CD4-positive, alpha-beta T cell (primary cell): ENCODE measurements at regions of chr21 and their contacts with region 1.

Region 1: DNA sequence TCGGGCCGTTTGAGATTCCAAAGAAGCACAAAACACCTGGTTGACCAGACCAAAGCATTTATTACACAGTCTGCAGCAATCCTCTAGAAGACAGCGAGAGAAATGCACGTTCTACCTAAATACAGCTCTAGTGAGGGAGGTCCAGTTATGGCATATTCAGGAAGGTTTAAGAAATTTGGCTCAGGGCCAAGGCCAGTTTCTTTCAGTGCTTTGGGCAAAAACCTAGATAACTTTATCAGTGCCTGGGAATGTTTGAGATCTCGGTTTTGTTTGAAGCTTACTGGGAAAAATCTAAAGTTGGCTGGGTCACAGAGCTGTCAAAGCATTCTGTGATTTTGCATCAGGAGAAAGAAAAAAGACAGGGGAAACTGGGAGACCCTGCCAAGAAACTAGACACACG is 514.0 kb upstream of the TMPRSS15 start:
- DNase-seq: no peak
- ATAC-seq: no peak
- H3K4me3 ChIP-seq: no peak overlapping the region
- H3K4me3 Mint-ChIP-seq: no peak overlapping the region
- H3K27ac ChIP-seq: no peak overlapping the region
- H3K27ac Mint-ChIP-seq: no peak overlapping the region
- H3K4me1 ChIP-seq: no peaks in the 10 kb centered on the region
- H3K4me1 Mint-ChIP-seq: no peaks in the 10 kb centered on the region
- H3K27me3 ChIP-seq: no peaks in the 10 kb centered on the region
- H3K27me3 Mint-ChIP-seq: no peaks in the 10 kb centered on the region
- CTCF ChIP-seq: no peak

Region 2: GRCh38 chr21:18477043-18477442 is 440.6 kb before region 1 on chr21:
- CTCF ChIA-PET with region 1: no interaction called
- POLR2A ChIA-PET with region 1: no interaction called
- intact Hi-C with region 1: no loop called
- DNase-seq: no peak
- ATAC-seq: no peak
- H3K4me3 ChIP-seq: no peak overlapping the region
- H3K4me3 Mint-ChIP-seq: no peak overlapping the region
- H3K27ac ChIP-seq: no peak overlapping the region
- H3K27ac Mint-ChIP-seq: no peak overlapping the region
- H3K4me1 ChIP-seq: no peaks in the 10 kb centered on the region
- H3K4me1 Mint-ChIP-seq: no peaks in the 10 kb centered on the region
- H3K27me3 ChIP-seq: no peaks in the 10 kb centered on the region
- H3K27me3 Mint-ChIP-seq: no peaks in the 10 kb centered on the region
- CTCF ChIP-seq: no peak

Region 3: GRCh38 chr21:18869105-18869504 is 48.5 kb before region 1 on chr21:
- CTCF ChIA-PET with region 1: no interaction called
- POLR2A ChIA-PET with region 1: no interaction called
- intact Hi-C with region 1: loop called in 1 of 2 experiments (anchors 10 kb)
- DNase-seq: no peak
- ATAC-seq: no peak
- H3K4me3 ChIP-seq: no peak overlapping the region
- H3K4me3 Mint-ChIP-seq: no peak overlapping the region
- H3K27ac ChIP-seq: no peak overlapping the region
- H3K27ac Mint-ChIP-seq: no peak overlapping the region
- H3K4me1 ChIP-seq: no peaks in the 10 kb centered on the region
- H3K4me1 Mint-ChIP-seq: no peaks in the 10 kb centered on the region
- H3K27me3 ChIP-seq: no peaks in the 10 kb centered on the region
- H3K27me3 Mint-ChIP-seq: no peaks in the 10 kb centered on the region
- CTCF ChIP-seq: no peak